ENCODE measurements at regions of chr13 and their contacts with region 1.

Region 1: DNA sequence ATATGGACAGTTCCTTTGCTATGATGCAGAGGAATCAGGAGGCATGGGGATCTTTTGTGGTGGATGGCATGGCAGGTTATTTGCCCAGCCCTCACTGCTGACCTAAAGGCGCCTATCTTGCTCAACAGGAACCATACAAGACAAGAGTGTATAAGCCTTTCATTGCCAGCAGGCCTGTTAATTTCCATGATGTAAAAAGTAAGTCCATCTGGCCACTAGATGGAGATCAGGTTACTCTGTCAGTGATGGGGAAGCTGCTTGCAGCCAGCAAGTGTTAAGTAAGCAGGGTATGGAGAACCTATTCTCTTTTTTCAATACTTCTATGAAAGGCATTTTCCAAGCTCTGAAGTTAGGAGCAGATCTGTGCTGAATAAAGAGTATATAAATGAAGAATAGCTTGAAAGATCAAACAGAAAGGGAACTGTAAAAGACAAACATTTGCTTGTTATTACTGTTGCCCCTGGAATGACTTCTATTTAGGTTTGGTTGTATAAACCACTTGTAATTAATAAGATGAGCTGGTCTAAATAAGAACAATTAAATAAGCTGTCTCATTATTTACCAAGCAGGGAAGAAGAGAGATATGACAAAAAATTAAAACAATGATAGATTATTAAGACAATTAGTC is 210.9 kb downstream of the RGCC start:
- DNase-seq: peak; percentile 55
- CTCF ChIP-seq: peak; percentile 70

Region 2: GRCh38 chr13:41652727-41653361 is 15.4 kb before region 1 on chr13:
- CTCF ChIA-PET with region 1: interaction called, 49 read pairs
- POLR2A ChIA-PET with region 1: no interaction called
- DNase-seq: peak; percentile 51
- CTCF ChIP-seq: peak; percentile 57

Region 3: DNA sequence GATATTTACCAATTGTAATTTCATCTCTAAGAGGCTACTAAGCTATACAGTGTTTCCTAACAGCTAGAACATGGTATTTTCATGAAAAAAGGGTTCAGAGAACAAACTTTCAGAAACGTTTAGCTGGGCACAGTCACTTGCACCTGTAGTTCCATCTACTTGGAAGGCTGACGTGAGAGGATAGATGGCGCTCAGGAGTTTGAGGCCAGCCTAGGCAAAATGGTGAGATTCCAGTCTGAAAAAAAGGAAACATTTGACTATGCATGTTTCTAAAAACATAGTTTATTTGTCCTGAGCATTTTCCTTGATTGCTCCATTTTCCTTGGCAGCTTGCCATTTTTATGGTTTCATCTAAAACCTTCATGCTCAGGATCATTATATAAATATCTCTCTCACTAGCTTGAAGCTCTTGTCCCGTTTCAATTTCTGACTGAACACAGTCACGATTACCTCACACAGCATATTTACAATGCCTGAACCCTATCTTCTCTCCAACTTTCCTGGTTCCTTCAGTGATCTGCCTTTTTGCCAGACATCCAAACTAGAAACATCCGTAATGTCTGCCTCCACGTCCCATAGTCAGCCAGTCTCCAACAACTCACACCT is 10.1 kb before region 1 on chr13:
- CTCF ChIA-PET with region 1: interaction called, 49 read pairs
- POLR2A ChIA-PET with region 1: no interaction called
- DNase-seq: no peak
- CTCF ChIP-seq: no peak

Region 4: DNA sequence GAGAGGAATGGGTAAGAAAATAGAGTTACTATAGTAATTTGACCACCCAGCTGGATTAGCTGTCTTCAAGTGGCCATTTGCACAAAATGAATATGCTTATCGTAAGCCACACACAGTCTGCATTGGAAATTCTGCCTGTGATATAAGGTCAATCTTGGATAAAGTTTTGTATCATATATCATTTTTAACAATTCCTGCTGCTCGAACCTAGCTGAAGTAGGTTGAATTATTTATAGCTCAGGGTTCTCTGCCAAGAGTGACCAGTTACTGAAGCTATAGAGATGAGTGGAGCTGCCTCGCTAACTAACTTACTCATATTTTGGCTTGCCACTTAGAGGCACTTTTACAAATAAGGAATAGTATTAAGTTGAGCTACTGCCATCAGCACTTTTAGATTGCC is 10.0 kb after region 1 on chr13:
- CTCF ChIA-PET with region 1: interaction called, 84 read pairs
- POLR2A ChIA-PET with region 1: no interaction called
- DNase-seq: no peak
- CTCF ChIP-seq: no peak

Region 5: DNA sequence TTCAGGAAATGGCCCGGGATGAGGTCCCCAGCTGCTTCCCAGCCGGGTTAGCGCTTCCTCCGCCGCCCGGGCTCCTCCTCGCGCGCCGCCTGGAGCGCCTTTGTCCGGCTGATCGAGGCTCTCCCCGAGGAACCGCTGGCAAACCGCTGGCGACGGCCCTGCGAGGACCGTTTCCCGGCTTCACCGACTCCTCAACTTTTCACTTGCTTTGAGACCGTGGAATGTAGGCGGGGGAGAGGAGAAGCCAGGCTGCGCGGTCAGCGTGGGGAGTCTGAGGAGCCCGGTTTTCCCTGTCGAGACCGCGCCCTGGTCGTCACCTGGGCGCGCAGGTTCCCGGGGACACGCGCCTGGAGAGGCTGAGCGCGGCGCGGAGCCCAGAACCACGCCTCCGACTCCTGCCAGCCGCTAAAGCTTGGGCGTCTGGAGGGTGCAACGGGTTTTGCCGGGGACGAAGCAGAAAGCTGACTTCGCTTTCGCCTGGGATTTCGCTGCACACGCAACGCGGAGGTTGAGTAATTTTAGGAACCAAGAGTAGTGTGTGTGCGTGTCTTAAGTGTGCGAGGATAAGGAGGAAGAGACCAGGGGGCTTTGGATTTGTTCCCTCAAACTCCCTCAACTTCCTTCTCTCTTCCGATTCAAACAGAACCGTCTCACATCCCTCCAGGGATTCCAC is 372.9 kb after region 1 on chr13:
- CTCF ChIA-PET with region 1: interaction called, 15 read pairs
- POLR2A ChIA-PET with region 1: no interaction called
- DNase-seq: peak; percentile 41
- CTCF ChIP-seq: no peak

Region 6: DNA sequence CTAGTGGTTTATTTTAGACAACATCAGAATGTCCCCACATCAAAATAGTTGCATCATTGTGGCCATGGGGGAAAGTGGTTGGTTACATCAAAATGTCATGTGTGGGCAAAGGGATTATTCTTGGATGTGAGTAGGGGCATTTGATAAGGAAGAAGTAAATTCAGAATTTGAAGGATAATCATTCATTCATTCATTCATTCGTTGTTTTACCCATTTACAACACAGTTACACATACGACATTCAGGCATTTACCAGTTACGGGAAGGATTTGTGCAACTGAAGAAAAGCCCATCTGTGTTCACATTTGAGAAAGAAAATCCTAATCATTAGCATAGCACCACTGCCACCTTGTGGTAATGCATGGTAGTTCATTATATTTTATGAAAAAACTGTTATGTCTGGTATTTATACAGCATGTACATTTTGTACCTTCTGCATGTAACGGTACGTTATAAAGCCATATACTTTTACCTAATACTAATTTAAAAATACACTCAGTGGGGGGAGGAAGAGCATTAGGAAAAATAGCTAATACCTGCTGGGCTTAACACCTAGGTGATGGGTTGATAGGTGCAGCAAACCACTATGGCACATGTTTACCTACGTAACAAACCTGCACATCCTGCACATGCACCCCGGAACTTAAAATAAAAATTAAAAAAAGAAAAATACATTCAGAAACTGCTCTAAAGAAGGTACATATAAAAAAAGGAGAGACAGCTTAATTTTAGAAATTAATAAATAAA is 442.3 kb after region 1 on chr13:
- CTCF ChIA-PET with region 1: interaction called, 96 read pairs
- POLR2A ChIA-PET with region 1: no interaction called
- DNase-seq: peak; percentile 51
- CTCF ChIP-seq: peak; percentile 42

Region 7: GRCh38 chr13:42702716-42703115 is 1034.5 kb after region 1 on chr13:
- CTCF ChIA-PET with region 1: no interaction called
- POLR2A ChIA-PET with region 1: no interaction called
- DNase-seq: no peak
- CTCF ChIP-seq: no peak

Measured in GM10248 (cell line).